ENCODE measurements at regions of chr9 and their contacts with region 1.

Region 1: GRCh38 chr9:76458903-76459690 is at the start of gene GCNT1:
- DNase-seq: peak; percentile 92
- H3K4me3 Mint-ChIP-seq: peak within 1 kb of the TSS; percentile 83
- H3K27ac Mint-ChIP-seq: peak within 1 kb of the TSS; percentile 42
- H3K4me1 Mint-ChIP-seq: peaks cover 35% of the 10 kb centered on the region
- H3K27me3 Mint-ChIP-seq: peaks cover 6% of the 10 kb centered on the region

Region 2: DNA sequence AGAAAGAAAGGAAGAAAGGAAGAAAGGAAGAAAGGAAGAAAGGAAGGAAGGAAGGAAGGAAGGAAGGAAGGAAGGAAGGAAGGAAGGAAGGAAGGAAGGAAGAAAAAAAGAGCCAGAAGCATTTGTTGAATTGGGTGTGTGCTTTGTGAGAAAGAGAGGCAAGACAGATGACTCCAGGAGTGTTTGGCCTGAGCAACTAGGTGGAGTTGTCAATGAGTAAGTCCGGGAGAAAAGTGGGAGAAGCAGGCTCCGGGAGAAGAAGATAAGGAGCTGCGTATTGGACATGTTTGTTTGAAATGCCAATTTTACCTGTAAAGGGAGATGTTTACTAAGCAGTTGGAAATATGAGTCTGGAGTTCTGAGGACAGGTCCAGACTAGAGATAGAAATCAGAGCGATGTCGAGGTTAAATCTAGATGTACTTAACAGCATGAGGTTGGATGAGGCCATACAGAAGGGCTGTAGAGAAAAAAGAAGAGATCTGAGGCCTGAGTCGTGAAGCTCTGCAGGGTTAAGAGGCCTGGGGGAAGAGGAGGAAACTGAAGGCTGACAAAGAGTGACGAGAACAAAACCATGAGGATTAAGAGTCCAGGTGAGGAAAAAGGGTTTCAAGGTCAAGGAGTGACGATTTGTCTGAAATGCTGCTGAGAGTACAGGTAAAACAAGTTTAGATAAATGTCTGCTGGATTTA is 15.1 kb before region 1 on chr9:
- CTCF ChIA-PET with region 1: interaction called, 20 read pairs
- DNase-seq: no peak
- H3K4me3 Mint-ChIP-seq: no peak overlapping the region
- H3K27ac Mint-ChIP-seq: no peak overlapping the region
- H3K4me1 Mint-ChIP-seq: peaks cover 10% of the 10 kb centered on the region
- H3K27me3 Mint-ChIP-seq: peaks cover 7% of the 10 kb centered on the region